Right lobe of liver (tissue), 6 donors: ENCODE measurements at regions of chr11 and their contacts with region 1.

Region 1: GRCh38 chr11:118956094-118956846 is at the start of gene UPK2:
- DNase-seq: peak; percentile 90 to 91 (median 90)
- ATAC-seq: peak; percentile 98 to 100 (median 99)
- H3K4me3 ChIP-seq: no peak within 1 kb of the TSS
- H3K27ac ChIP-seq: no peak within 1 kb of the TSS
- H3K4me1 ChIP-seq: no peaks in the 10 kb centered on the region
- H3K27me3 ChIP-seq: no peaks in the 10 kb centered on the region
- CTCF ChIP-seq: peak; percentile 96 to 99 (median 97)
- POLR2A ChIP-seq: no peak
- total RNA-seq, gene UPK2: not detected

Region 2: DNA sequence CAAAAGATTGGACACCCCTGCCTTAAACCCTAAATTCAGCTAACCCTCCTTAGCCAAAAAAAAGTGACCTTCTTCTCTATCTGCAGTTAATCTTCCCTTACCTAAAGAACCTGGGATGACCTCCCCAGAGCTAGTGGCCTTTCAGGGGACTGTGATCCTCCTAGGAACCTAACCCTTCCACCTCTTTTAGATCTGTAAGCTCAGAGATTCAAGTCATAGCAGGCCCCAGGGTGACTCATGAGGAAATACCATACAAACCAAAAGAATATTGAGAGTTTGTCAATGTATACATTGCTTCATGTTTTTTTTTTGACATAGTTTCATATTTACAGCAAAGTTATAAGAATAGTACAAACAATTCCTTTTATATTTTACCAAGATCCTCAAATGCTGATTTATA is 110.9 kb before region 1 on chr11:
- intact Hi-C with region 1: no loop called
- DNase-seq: no peak
- ATAC-seq: no peak
- H3K4me3 ChIP-seq: no peak overlapping the region
- H3K27ac ChIP-seq: no peak overlapping the region
- H3K4me1 ChIP-seq: peaks cover 0 to 23% (median 6%) of the 10 kb centered on the region in 4 donors
- H3K27me3 ChIP-seq: no peaks in the 10 kb centered on the region
- CTCF ChIP-seq: no peak
- POLR2A ChIP-seq: no peak

Region 3: GRCh38 chr11:118907051-118908042 is 48.9 kb before region 1 on chr11:
- intact Hi-C with region 1: loop called (anchors 5 to 10 kb)
- DNase-seq: peak; percentile 82 to 90 (median 87)
- ATAC-seq: peak; percentile 86 to 92 (median 88)
- H3K4me3 ChIP-seq: no peak overlapping the region
- H3K27ac ChIP-seq: no peak overlapping the region
- H3K4me1 ChIP-seq: peaks cover 0 to 17% (median 8%) of the 10 kb centered on the region in 4 donors
- H3K27me3 ChIP-seq: no peaks in the 10 kb centered on the region
- CTCF ChIP-seq: peak; percentile 93 to 98 (median 96)
- POLR2A ChIP-seq: no peak